Heart right ventricle (tissue), 16 donors: ENCODE measurements at regions of chr2 and their contacts with region 1.

Region 1: GRCh38 chr2:1544478-1545069 is 131.3 kb downstream of the TPO start:
- DNase-seq: no peak
- ATAC-seq: peak in 4 of 8 donors; percentile 23 to 58 (median 41)
- H3K4me3 ChIP-seq: no peak overlapping the region
- H3K27ac ChIP-seq: no peak overlapping the region
- H3K4me1 ChIP-seq: peaks cover 0 to 12% (median 5%) of the 10 kb centered on the region in 9 donors
- H3K27me3 ChIP-seq: peaks cover 0 to 10% (median 0%) of the 10 kb centered on the region in 7 donors
- CTCF ChIP-seq: no peak

Region 2: GRCh38 chr2:854460-854859 is 690.1 kb before region 1 on chr2:
- intact Hi-C with region 1: loop called in 5 of 10 experiments (anchors 5 to 10 kb)
- DNase-seq: no peak
- ATAC-seq: peak in 1 of 8 donors; percentile 42
- H3K4me3 ChIP-seq: no peak overlapping the region
- H3K27ac ChIP-seq: peak overlapping the region in 1 of 10 donors; percentile 1
- H3K4me1 ChIP-seq: peaks cover 0 to 7% (median 0%) of the 10 kb centered on the region in 9 donors
- H3K27me3 ChIP-seq: peaks cover 0 to 6% (median 0%) of the 10 kb centered on the region in 7 donors
- CTCF ChIP-seq: peak in 8 of 9 donors; percentile 37 to 66 (median 56)

Region 3: DNA sequence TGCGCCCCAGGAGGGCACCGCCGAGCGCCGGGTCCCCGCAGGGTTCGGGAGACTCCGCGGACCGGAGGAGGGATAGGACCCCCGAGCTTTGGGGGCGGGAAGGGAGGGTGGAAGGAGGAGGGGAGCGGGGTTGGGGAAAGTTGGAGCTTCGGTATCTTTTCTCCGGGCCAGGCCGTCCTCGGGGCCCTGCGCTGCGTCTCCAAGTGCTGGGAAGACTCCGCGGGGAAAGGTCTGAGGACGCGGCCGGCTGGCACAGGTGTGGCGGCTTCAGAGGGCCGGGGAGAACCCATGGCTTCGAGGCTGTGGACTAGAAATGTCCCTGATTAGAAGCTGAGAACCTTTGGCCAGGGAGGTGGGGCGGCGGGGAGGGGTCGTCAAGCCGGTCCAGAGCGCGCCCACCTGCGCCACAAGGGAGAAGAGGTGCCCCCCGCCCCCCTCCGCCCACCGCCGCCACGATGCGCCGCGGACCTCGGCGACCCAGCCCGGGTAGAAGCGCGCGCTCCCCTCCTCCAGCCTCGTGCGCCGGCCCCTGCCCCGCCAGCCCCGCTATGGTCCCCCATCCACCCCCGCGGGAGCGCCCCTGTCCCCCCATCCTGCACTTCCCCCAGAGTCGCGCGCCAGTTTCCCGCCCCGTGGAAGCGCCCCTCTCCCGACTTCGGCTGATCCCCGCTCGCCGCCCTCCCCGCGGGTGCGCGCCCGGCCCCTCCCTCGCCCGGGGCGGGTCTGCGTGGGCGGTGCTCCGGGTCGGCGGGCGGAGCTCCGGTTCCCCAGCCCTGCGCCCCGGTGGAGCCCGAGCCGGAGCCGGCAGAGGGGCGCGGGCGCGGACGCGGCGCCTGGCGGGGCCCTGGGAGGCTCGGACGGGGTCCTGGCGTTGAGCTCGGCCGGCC is 594.3 kb before region 1 on chr2 and contains the start of gene SNTG2:
- intact Hi-C with region 1: loop called (anchors 2 to 10 kb)
- DNase-seq: peak; percentile 20 to 43
- ATAC-seq: peak; percentile 63 to 91 (median 84)
- H3K4me3 ChIP-seq: peak within 1 kb of the TSS; percentile 32 to 66 (median 56)
- H3K27ac ChIP-seq: peak within 1 kb of the TSS in 2 of 10 donors; percentile 12 to 28
- H3K4me1 ChIP-seq: peaks cover 0 to 20% (median 12%) of the 10 kb centered on the region in 9 donors
- H3K27me3 ChIP-seq: peaks cover 7 to 84% (median 72%) of the 10 kb centered on the region in 7 donors
- CTCF ChIP-seq: no peak
- total RNA-seq, gene SNTG2: 0.49 to 2.8 (median 1.2) TPM in 9 of 10 donors, not detected in the other

Region 4: GRCh38 chr2:1509271-1510065 is 35.1 kb before region 1 on chr2:
- intact Hi-C with region 1: loop called in 1 of 10 experiments (anchors 2 kb)
- DNase-seq: peak in 1 of 2 donors; percentile 44
- ATAC-seq: peak in 7 of 8 donors; percentile 76 to 92 (median 86)
- H3K4me3 ChIP-seq: no peak overlapping the region
- H3K27ac ChIP-seq: peak overlapping the region in 9 of 10 donors; percentile 37 to 82 (median 75)
- H3K4me1 ChIP-seq: peaks cover 0 to 18% (median 0%) of the 10 kb centered on the region in 9 donors
- H3K27me3 ChIP-seq: peaks cover 0 to 10% (median 0%) of the 10 kb centered on the region in 7 donors
- CTCF ChIP-seq: no peak

Region 5: GRCh38 chr2:1521191-1521877 is 23.2 kb before region 1 on chr2:
- intact Hi-C with region 1: no loop called
- DNase-seq: no peak
- ATAC-seq: peak in 1 of 8 donors; percentile 24
- H3K4me3 ChIP-seq: no peak overlapping the region
- H3K27ac ChIP-seq: no peak overlapping the region
- H3K4me1 ChIP-seq: peaks cover 0 to 17% (median 6%) of the 10 kb centered on the region in 9 donors
- H3K27me3 ChIP-seq: no peaks in the 10 kb centered on the region
- CTCF ChIP-seq: no peak